GM10248 (cell line): ENCODE measurements at regions of chr2 and their contacts with region 1.

Region 1: DNA sequence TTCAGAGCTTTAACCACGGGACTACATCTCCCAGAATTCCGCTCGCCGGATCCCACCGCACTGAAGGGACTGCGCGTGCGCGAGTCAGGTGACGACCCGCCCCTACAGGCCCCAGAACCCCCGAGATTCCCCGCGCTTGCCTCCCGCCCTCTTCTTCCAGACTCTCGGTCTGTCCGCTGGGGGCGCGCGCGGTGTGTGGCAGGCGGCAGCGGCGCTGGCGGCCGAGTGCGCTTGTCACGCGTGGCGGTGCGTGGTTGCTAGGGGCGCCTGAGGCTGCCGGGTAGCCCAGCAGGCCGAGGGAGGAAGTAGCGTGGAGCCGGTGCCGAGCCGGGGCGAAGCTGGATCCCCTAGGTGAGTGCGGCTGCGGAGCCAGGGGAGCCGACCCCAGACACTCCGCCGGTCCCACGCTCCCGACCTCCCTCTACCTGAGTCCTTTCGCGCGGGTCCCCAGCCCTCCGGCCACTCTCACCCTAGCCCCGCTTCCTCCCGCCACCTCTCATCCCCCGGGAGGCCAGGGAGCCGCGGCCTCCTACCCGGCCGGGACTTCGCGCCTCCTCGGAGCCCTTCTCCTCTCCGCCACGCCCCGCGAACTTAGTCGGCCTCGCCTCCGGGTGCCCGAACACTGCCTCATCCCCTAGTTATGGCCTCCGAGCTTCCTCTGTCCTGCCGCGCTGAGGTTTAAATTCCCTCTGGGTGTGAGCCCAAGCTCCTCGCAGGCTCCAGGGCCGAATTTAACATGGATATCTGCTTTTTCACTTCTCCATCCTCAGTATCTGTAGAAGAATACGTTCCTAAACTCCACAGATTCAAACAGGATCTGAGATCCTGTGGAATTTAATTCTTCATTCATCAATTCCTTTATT is at the start of gene TTLL4:
- DNase-seq: peak; percentile 99
- CTCF ChIP-seq: peak; percentile 93

Region 2: DNA sequence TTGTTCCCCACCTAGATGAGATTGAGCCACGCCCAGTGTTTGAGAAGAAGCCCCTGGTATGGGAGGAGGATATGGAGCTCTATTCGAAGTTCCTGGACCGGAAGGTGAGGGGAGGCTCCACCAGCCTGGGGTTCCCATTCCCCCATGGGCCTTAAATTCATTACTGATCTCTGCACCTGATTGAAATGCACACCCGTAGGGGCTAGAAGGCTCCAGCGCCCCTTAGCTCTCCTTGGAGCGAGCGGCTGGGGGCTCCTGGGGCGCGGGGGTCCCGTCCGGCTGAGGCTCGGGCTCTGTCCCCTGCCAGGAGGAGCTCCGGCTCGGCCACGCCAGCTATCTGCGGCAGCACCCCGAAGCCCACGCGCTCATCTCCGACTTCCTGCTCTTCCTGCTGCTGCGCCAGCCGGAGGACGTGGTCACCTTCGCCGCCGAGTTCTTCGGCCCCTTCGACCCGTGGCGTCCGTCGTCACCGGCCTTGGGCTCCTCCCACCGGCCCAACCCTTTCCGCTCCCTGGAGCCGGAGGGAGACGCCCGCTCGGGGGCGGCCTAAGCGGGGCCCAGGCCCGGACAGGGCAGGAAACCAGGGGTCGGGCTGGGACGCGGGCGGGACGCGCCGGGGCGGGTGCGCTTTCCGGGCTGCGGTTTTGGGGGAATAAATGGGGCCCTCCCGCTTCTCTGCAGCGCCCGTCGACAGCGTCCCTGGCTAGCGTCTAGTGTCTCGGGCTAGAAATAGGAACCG is 343.3 kb before region 1 on chr2:
- CTCF ChIA-PET with region 1: no interaction called
- POLR2A ChIA-PET with region 1: no interaction called
- DNase-seq: peak; percentile 95
- CTCF ChIP-seq: no peak

Region 3: DNA sequence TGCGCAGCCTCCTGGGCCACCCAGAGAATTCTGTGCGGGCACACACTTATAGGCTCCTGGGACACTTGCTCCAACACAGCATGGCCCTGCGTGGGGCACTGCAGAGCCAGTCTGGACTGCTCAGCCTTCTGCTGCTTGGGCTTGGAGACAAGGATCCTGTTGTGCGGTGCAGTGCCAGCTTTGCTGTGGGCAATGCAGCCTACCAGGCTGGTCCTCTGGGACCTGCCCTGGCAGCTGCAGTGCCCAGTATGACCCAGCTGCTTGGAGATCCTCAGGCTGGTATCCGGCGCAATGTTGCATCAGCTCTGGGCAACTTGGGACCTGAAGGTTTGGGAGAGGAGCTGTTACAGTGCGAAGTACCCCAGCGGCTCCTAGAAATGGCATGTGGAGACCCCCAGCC is 12.0 kb before region 1 on chr2:
- CTCF ChIA-PET with region 1: interaction called, 16 read pairs
- POLR2A ChIA-PET with region 1: interaction called, 3 read pairs
- DNase-seq: no peak
- CTCF ChIP-seq: no peak

Region 4: GRCh38 chr2:218727502-218728165 is 16.7 kb after region 1 on chr2:
- CTCF ChIA-PET with region 1: interaction called, 39 read pairs
- POLR2A ChIA-PET with region 1: no interaction called
- DNase-seq: no peak
- CTCF ChIP-seq: peak; percentile 14

Region 5: DNA sequence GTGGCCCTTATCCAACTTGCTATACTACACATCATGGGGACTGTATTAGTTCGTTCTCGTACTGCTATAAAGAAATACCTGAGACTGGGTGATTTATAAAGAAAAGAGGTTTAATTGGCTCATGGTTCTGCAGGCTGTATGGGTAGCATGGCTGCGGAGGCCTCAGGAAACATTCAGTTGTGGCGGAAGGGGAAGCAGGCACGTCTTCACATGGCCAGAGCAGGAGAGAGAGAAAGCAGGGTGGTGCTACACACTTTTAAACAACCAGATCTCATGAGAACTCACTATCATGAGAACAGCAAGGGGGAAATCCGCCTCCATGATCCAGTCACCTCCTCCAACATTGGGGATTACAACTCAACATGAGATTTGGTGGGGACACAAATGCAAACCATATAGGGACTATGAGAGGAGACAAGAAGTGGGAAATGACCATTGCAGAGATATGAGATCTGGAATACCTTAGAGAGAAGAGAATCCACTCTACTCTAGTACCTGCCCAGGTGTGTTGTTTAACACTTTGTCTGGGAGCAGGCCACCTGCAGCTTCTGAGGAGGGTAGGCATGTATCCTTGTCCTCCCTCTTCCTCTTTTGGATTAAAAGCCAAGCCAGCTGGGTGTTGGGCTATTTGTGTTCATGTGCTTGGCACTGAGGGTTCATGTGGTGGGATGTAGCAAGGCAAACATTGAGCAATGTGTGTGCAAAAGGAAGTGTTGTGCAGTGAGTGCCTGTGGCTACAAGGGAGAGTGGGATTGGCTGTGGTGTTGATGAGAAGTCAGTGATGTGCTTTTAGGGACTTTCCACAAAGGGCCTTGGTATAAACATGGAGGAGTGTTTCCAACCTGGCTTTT is 22.5 kb after region 1 on chr2:
- CTCF ChIA-PET with region 1: interaction called, 18 read pairs
- POLR2A ChIA-PET with region 1: no interaction called
- DNase-seq: peak; percentile 42
- CTCF ChIP-seq: no peak

Region 6: GRCh38 chr2:218811382-218811781 is 100.5 kb after region 1 on chr2:
- CTCF ChIA-PET with region 1: no interaction called
- POLR2A ChIA-PET with region 1: no interaction called
- DNase-seq: no peak
- CTCF ChIP-seq: no peak